GM13977 (cell line): ENCODE measurements at regions of chr2 and their contacts with region 1.

Region 1: DNA sequence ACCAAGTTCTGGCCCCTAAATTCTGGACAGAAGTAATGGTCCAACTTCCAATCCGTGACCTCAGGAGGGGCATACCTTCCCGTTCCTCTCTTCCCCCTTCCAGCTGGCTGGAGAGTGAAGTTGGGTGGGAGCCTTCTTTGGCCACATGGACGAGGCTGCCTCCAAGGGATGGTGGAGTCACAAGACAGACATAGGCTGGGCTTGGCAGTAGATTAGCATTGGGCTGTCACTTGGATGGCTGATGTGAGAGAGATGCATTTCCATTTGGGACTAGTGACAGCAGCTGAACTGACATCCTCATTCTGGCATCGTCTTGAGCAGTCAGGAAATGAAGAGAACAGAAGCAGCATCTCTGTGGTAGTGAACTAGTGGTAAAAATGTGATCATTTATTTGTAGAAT is 12.6 kb downstream of the NT5DC4 start:
- DNase-seq: no peak
- CTCF ChIP-seq: no peak

Region 2: DNA sequence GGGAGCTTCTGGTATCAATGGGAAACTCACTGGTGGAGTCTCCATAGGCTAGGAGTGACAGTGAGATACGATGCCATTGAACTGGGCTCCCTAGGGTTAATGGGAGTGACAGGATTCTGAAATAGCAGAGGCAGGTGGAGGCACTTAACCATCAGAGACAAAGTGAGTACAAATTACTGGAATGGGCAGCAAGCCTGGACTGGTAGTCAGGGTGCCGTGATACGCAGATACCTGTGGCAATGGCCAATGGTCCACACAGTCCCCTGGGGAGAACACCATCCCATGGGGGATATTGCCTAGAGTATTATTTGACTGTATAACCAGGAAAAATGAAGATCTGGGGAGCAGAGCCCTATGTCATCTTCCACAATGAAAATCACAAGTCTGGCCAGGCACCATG is 131.7 kb before region 1 on chr2:
- in situ Hi-C with region 1: loop called (anchors 5 kb)
- DNase-seq: no peak
- CTCF ChIP-seq: no peak

Region 3: DNA sequence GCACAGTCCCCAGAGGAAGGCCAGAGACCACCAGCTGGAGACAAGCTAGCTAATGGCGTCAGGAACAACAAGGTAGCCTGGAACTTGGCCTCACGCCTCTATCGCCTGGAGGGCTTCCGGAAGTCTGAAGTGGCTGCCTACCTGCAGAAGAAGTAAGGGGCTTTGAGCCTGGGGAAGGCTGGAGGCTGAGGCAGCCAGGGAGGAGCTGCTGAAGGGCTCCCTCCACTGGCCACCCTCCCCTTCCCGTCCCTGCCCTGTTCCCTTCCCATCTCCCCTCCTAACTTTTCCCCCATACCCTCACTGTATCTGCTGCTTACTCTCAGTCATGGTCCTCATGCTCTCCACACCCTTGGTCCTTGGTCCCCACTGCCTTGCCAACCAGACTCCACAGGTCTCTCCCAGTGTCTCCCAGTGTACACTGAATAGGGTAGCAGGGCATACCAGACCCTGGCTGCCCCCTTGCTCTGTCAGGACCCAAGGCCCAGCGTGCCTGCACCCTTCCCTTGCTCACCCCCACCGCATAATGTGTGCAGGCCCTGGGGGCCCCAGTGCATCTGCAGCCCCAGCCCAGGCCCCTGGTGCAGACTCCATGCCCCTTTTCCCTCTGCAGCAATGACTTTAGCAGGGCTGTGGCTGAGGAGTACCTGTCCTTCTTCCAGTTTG is 459.1 kb after region 1 on chr2:
- in situ Hi-C with region 1: no loop called
- DNase-seq: no peak
- CTCF ChIP-seq: peak; percentile 4